Transverse colon (tissue), 4 donors: ENCODE measurements at regions of chr9 and their contacts with region 1.

Region 1: DNA sequence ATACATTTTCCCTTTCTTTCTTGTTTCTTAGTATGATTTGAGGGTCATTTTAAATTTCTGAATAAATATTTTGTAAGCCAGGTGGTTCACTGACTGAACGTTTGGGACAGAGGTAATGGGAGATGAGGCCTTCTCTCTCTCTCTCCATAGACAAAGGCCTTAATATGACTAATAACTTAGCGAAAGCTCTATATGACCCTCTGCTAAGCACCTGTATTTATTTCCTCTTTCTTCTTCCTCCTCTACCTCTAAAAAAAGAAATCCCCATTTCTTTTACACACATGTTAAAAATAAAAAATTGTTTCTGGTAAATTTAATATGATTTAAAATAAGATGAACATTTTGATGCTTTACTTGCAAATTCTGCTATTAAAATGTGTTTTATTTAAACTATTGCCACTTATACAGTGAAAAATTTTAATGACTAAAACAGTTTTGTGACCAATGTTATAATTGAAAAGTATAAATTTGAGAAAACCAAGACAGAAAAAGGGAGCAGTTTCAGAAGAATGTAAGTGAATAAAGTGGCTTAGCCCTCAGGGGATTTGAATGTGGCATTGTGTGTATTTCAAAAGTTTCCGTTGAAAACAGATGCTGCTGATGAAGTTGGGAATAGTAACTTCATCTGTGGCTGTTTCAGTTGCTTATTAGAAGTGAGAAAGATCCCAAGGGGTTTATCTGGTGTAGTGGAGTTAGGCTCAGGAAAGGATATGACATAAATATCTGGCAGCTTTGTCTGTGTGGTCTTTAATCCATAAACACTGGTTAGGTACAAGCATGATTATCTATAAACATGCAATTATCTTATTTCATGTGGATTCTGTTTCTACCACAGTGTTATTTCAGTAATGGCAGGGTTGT is 128.6 kb upstream of the GRHPR start:
- DNase-seq: no peak
- H3K4me3 ChIP-seq: no peak overlapping the region
- H3K27ac ChIP-seq: no peak overlapping the region
- H3K4me1 ChIP-seq: peaks cover 0 to 11% (median 6%) of the 10 kb centered on the region in 4 donors
- H3K27me3 ChIP-seq: no peaks in the 10 kb centered on the region
- CTCF ChIP-seq: no peak
- EP300 ChIP-seq: no peak
- POLR2A ChIP-seq: no peak

Region 2: DNA sequence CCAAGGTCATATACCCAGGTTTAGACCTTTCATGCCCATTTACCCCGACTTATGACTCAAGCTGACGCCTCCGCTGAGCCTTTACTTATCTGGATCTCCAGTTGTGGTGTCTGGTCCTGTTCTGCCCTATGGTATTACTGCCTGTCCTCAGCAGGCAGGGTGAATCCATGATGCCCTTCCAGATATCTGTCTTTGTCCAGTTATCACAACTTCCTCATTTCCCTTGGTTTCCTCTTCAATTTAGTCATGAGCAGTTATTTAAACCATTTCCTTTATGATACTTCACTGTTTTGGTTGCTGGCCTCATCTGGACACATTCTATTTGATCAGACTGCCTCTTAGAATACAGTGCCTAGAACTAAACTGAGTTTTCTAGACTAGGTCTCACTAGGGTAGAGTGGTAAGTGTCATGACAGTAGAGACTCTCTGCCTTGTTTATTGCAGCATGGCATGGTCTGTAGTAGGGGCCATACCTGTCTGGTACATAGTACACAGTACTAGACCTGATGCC is 627.9 kb before region 1 on chr9:
- in situ Hi-C with region 1: no loop called
- intact Hi-C with region 1: no loop called
- DNase-seq: no peak
- H3K4me3 ChIP-seq: no peak overlapping the region
- H3K27ac ChIP-seq: no peak overlapping the region
- H3K4me1 ChIP-seq: peaks cover 0 to 3% (median 0%) of the 10 kb centered on the region in 4 donors
- H3K27me3 ChIP-seq: no peaks in the 10 kb centered on the region
- CTCF ChIP-seq: no peak
- EP300 ChIP-seq: no peak
- POLR2A ChIP-seq: no peak

Region 3: GRCh38 chr9:36956908-36957307 is 337.0 kb before region 1 on chr9:
- in situ Hi-C with region 1: no loop called
- intact Hi-C with region 1: no loop called
- DNase-seq: no peak
- H3K4me3 ChIP-seq: no peak overlapping the region
- H3K27ac ChIP-seq: no peak overlapping the region
- H3K4me1 ChIP-seq: peaks cover 0 to 7% (median 3%) of the 10 kb centered on the region in 4 donors
- H3K27me3 ChIP-seq: peaks cover 60% of the 10 kb centered on the region
- CTCF ChIP-seq: no peak
- EP300 ChIP-seq: no peak
- POLR2A ChIP-seq: no peak

Region 4: DNA sequence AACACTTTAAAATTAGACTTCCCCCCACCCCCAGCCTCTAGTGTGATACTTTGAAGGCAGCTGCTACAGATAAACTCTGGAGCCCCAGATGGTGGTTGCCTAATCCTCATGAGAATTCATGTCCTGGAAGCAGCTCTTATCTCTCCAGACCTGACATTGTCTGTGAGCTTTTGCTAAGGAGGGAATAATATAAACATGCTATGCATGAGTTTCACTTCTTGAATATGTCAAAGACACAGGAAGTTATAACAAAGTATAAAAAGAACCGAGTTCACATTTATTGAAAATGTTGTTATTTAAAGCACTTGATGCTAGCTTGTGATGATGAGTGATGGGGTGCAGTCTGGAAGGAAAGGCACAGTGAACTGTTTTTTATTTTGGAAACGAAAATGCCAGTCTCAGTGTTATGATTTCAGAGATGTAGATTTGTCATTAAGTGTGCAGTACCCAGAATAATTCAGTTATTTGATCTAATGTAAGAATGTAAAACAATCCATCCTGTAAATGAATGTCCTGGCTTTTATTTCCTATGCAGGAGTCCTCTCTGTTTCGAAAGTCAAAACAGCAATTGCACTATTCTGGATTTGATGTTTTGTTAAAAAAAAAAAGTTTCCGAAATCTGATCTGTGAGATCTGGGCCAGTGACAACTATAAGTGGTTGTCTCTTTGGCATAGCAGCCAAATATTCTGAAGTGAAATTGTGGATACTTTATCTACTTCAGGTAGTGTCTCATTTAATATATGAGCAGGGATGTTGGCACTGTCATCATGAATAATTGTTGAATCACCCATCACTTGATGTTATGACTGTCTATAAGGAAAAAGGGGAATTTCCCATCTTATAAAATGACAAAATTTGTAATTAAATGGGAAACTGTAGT is 96.5 kb before region 1 on chr9:
- in situ Hi-C with region 1: loop called in 1 of 4 experiments (anchors 25 kb)
- intact Hi-C with region 1: no loop called
- DNase-seq: no peak
- H3K4me3 ChIP-seq: no peak overlapping the region
- H3K27ac ChIP-seq: no peak overlapping the region
- H3K4me1 ChIP-seq: peaks cover 0 to 10% (median 6%) of the 10 kb centered on the region in 4 donors
- H3K27me3 ChIP-seq: no peaks in the 10 kb centered on the region
- CTCF ChIP-seq: no peak
- EP300 ChIP-seq: no peak
- POLR2A ChIP-seq: no peak